Posterior vena cava (tissue), 2 donors: ENCODE measurements at regions of chr15 and their contacts with region 1.

Region 1: DNA sequence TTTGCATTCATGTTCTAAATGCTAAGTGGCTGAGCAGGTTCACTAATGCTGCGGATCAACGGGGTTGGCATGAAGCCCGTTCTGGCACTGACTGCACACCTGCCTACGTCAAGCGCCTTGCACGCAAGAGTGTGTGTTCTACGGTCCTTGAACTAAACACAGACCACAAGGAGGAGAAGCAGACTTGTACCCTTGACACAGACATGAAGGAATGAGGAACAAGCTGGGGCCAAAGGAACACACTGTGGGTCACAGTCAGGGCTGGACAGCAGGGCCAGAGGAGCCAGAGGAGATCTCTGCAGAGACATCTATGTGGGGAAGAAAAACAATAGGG is 48.0 kb upstream of the LDHAL6B start:
- DNase-seq: no peak

Region 2: GRCh38 chr15:59099162-59099685 is 59.4 kb before region 1 on chr15:
- intact Hi-C with region 1: loop called in 1 of 2 experiments (anchors 10 kb)
- DNase-seq: no peak

Region 3: GRCh38 chr15:59349680-59350420 is 191.2 kb after region 1 on chr15:
- intact Hi-C with region 1: no loop called
- DNase-seq: no peak